ENCODE measurements at regions of chr1 and their contacts with region 1.

Region 1: DNA sequence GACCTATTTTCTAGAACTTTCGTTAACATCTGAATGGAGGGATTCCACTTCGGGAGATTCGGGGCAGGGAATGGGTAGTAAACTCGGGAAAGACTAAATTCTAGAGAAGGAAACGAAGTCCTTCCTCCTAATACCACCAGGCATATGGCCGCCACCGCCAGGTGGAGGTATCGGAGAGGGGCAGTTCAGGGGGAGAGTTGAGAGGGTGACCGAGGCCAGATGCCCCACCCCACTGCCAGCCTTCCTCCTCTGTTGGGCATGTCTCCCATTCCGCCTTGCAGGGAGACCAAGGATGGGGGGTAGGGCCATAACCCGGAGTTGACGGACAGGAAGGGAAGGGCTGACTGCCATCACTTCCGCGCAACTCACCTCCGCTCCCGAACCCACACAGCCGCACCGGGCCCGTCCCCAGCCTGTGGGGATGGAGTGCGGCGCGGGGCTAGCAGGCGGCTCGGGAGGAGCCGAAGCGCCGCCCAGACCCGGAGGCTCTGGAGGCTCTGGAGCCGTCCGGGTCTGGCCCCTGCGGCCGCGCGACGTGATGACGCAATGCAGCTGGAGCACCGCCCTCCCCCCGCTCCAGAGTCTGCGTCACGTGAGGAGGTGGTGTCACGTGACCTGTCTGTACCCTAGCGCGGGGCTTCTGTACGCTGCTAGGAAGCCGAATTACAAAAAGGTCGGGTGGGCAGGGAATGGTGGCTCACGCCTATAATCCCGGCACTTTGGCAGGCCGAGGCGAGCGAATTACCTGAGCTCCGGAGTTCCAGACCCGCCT is at the start of gene KLHL12:
- DNase-seq: peak; percentile 98
- H3K4me3 Mint-ChIP-seq: peak within 1 kb of the TSS; percentile 89
- H3K27ac Mint-ChIP-seq: peak within 1 kb of the TSS; percentile 92
- H3K4me1 Mint-ChIP-seq: peaks cover 23% of the 10 kb centered on the region
- H3K27me3 Mint-ChIP-seq: peaks cover 8% of the 10 kb centered on the region
- total RNA-seq, gene KLHL12: 28.0 and 30.5 TPM in 2 replicates

Region 2: DNA sequence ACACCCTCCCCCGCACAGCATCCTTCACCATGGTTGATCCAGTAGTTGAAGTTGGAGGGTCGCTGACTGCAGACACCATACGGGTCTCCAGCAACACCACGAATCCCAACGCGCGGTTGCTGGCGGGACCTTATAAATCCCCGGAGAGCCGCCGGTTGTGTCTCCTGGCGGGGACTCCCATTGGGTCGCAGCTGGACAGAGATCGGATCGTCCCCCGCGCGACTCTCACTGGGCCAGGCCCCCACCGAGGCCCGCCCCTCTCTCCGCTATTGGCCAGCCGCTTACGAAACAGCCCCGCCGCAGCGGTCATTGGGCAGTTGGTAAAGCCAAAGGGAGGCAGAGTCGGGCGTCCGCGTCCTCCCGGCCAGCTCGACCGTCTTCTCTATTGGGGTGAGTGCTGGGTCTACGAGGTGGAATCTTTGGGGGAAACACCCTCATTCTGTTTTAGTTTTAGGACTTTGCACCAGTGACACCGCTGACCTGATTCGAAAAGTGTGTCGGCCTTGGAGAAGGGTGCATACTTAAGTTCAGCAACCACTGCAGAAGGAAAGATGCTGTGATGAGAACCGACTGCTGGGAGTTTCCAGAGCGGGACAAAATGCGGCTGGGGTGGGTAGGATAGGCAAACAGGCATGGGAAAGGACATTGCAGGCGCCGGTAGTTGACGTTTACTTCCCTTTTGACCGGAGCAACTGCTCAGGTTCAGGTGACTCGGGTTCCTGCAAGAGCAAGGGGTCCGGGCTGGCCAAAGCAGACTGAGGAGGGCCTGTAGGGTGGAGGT is 65.3 kb before region 1 on chr1:
- intact Hi-C with region 1: no loop called
- DNase-seq: peak; percentile 86
- H3K4me3 Mint-ChIP-seq: peak overlapping the region; percentile 87
- H3K27ac Mint-ChIP-seq: no peak overlapping the region
- H3K4me1 Mint-ChIP-seq: peaks cover 13% of the 10 kb centered on the region
- H3K27me3 Mint-ChIP-seq: peaks cover 68% of the 10 kb centered on the region

Region 3: DNA sequence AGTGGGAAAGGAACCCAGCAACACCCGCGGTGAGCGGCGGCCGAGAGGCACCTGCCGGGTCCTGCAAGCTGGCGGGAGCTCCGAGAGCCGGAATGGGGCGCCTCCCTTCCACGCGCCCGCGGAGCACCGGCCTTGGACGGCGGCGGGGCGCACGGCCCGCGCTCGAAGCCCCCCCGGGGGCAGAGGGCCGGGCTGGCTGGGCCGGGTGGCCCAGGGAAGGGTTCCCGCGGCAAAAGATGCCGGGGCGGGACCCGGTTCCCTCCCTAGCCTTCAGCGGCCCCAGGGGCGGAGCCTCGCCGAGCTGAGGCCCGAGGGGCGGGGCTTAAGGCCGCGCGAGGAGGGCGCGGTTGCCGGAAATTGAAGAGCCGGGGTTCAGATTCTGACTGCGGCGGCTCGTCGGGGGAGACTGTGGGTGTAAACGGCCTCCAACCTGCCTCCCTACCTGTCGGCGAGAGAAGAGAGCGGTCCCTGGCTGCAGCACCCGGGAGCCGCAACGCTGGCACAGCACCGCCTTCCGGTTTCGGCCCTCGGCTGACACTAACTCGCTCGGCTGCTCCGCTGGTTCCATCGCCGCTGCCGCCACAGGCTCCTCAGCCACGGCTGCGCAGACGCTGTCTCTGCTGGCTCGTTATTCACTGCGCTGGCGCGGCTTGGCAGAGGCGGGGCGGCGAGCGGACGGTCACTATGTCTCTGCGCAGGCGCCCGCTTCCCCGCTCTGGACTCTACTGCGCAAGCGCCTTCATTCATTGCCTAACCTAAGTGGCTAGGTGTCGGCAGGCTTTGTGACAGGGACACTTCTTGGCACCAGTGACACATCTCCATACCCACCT is 38.2 kb before region 1 on chr1 and contains the start of gene RABIF:
- intact Hi-C with region 1: loop called (anchors 1 kb)
- DNase-seq: peak; percentile 99
- H3K4me3 Mint-ChIP-seq: peak within 1 kb of the TSS; percentile 93
- H3K27ac Mint-ChIP-seq: peak within 1 kb of the TSS; percentile 98
- H3K4me1 Mint-ChIP-seq: peaks cover 20% of the 10 kb centered on the region
- H3K27me3 Mint-ChIP-seq: peaks cover 2% of the 10 kb centered on the region
- total RNA-seq, gene RABIF: 11.8 and 12.7 TPM in 2 replicates

Region 4: DNA sequence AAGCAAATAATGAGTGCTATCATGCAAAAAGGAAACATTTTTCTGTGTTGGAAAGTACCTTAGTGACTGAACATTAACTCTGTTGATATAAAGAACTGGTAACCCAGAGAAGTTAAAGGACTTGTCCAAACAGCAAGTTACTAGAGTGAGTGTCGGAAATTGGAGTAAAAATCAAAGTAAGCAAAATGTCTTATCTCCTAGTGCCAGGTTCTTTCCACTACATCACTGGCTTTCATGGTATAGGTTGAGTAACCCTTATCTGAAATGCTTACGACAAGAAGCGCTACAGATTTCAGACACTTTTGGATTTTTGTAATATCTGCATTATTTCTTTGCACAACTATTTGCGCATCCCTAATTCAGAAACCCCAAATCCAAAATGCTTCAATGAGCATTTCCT is 21.6 kb before region 1 on chr1:
- intact Hi-C with region 1: no loop called
- DNase-seq: no peak
- H3K4me3 Mint-ChIP-seq: no peak overlapping the region
- H3K27ac Mint-ChIP-seq: no peak overlapping the region
- H3K4me1 Mint-ChIP-seq: no peaks in the 10 kb centered on the region
- H3K27me3 Mint-ChIP-seq: no peaks in the 10 kb centered on the region

Region 5: GRCh38 chr1:202938287-202938925 is 11.5 kb after region 1 on chr1:
- intact Hi-C with region 1: no loop called
- DNase-seq: no peak
- H3K4me3 Mint-ChIP-seq: no peak overlapping the region
- H3K27ac Mint-ChIP-seq: no peak overlapping the region
- H3K4me1 Mint-ChIP-seq: peaks cover 5% of the 10 kb centered on the region
- H3K27me3 Mint-ChIP-seq: peaks cover 18% of the 10 kb centered on the region

Region 6: GRCh38 chr1:202957733-202958543 is 31.0 kb after region 1 on chr1 and contains the start of gene ADIPOR1:
- intact Hi-C with region 1: loop called (anchors 1 kb)
- DNase-seq: peak; percentile 98
- H3K4me3 Mint-ChIP-seq: peak within 1 kb of the TSS; percentile 89
- H3K27ac Mint-ChIP-seq: peak within 1 kb of the TSS; percentile 82
- H3K4me1 Mint-ChIP-seq: peaks cover 31% of the 10 kb centered on the region
- H3K27me3 Mint-ChIP-seq: no peaks in the 10 kb centered on the region
- total RNA-seq, gene ADIPOR1: 86.7 and 92.1 TPM in 2 replicates

Region 7: DNA sequence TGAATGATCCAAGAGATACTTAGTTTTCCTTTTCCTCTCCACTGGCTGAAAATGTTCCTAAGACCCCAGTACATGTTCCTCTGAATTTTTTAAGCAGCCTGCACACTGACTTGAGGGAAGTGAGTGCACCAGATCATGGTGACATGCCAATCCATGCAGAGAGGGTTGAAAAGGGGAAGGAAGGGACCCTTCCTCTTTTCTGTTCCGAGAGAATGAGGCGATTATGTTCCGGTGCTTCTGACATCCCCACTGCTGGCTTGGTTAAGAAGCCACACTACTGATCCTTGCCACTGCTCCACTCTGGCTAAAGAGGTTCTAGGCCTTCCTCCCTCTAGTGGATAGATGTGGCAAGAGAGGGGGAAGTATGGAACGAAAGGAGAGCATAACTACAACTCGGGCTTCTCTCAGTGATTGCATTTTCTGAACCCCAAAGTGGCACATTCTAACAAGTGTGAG is 42.0 kb after region 1 on chr1:
- intact Hi-C with region 1: loop called (anchors 2 kb)
- DNase-seq: peak; percentile 81
- H3K4me3 Mint-ChIP-seq: no peak overlapping the region
- H3K27ac Mint-ChIP-seq: no peak overlapping the region
- H3K4me1 Mint-ChIP-seq: peaks cover 24% of the 10 kb centered on the region
- H3K27me3 Mint-ChIP-seq: peaks cover 15% of the 10 kb centered on the region

Region 8: GRCh38 chr1:202998836-202999750 is 72.2 kb after region 1 on chr1:
- intact Hi-C with region 1: loop called (anchors 2 kb)
- DNase-seq: peak; percentile 90
- H3K4me3 Mint-ChIP-seq: peak overlapping the region; percentile 62
- H3K27ac Mint-ChIP-seq: no peak overlapping the region
- H3K4me1 Mint-ChIP-seq: peaks cover 17% of the 10 kb centered on the region
- H3K27me3 Mint-ChIP-seq: peaks cover 30% of the 10 kb centered on the region

Region 9: GRCh38 chr1:203006948-203007871 is 80.3 kb after region 1 on chr1 and contains the start of gene TMEM183A:
- intact Hi-C with region 1: loop called (anchors 1 kb)
- DNase-seq: peak; percentile 98
- H3K4me3 Mint-ChIP-seq: peak within 1 kb of the TSS; percentile 86
- H3K27ac Mint-ChIP-seq: peak within 1 kb of the TSS; percentile 97
- H3K4me1 Mint-ChIP-seq: peaks cover 22% of the 10 kb centered on the region
- H3K27me3 Mint-ChIP-seq: no peaks in the 10 kb centered on the region
- total RNA-seq, gene TMEM183A: 77.7 and 82.8 TPM in 2 replicates

Measured in activated CD4-positive, alpha-beta T cell treated with anti-CD3 and anti-CD28 coated beads, Interleukin-2, amount 10 ng/mL, durations not matched to agents 24 days and 14 days (primary cell).